IMR-90 (cell line): ENCODE measurements at regions of chr4 and their contacts with region 1.

Region 1: DNA sequence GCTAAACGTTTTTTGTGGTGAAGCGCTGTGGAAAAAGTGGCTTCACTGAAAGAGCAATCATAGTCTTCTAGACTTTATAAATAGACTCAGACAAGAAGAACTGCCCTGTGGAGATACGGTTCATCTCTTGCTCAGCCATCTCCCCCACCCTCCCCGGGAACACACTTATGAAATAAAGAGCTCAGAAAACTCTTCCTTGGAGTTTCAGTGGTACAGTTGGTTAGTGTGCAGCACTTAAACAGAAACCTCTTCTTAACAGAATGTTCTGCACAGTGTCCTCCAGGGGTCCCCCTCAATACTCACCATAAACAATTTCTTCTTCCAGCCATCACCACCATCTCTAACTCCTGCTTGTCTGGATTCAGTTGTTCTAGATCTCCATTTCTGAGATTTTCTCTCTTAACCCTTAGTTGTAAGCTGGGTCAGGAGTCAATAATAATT is 313.0 kb downstream of the ARHGAP10 start:
- DNase-seq: no peak
- ATAC-seq: no peak; the same call in 1 of the 2 replicates
- H3K4me3 ChIP-seq: no peak overlapping the region
- H3K27ac ChIP-seq: no peak overlapping the region
- H3K4me1 ChIP-seq: no peaks in the 10 kb centered on the region; the same call in 1 of the 2 replicates
- H3K27me3 ChIP-seq: no peaks in the 10 kb centered on the region
- CTCF ChIP-seq: no peak
- POLR2A ChIP-seq: no peak
- RAD21 ChIP-seq: no peak

Region 2: GRCh38 chr4:147285751-147286150 is 759.2 kb before region 1 on chr4:
- CTCF ChIA-PET with region 1: no interaction called
- POLR2A ChIA-PET with region 1: no interaction called
- dilution Hi-C with region 1: no loop called
- in situ Hi-C with region 1: no loop called
- intact Hi-C with region 1: no loop called
- DNase-seq: peak; percentile 13
- ATAC-seq: no peak
- H3K4me3 ChIP-seq: no peak overlapping the region
- H3K27ac ChIP-seq: no peak overlapping the region
- H3K4me1 ChIP-seq: no peaks in the 10 kb centered on the region
- H3K27me3 ChIP-seq: no peaks in the 10 kb centered on the region
- CTCF ChIP-seq: no peak
- POLR2A ChIP-seq: no peak
- RAD21 ChIP-seq: no peak

Region 3: GRCh38 chr4:147924604-147925412 is 120.1 kb before region 1 on chr4:
- CTCF ChIA-PET with region 1: no interaction called
- POLR2A ChIA-PET with region 1: no interaction called
- dilution Hi-C with region 1: no loop called
- in situ Hi-C with region 1: no loop called
- intact Hi-C with region 1: no loop called
- DNase-seq: peak; percentile 40
- ATAC-seq: no peak
- H3K4me3 ChIP-seq: no peak overlapping the region
- H3K27ac ChIP-seq: no peak overlapping the region
- H3K4me1 ChIP-seq: peaks cover 12% of the 10 kb centered on the region
- H3K27me3 ChIP-seq: no peaks in the 10 kb centered on the region
- CTCF ChIP-seq: peak; percentile 43
- POLR2A ChIP-seq: no peak
- RAD21 ChIP-seq: peak; percentile 44

Region 4: DNA sequence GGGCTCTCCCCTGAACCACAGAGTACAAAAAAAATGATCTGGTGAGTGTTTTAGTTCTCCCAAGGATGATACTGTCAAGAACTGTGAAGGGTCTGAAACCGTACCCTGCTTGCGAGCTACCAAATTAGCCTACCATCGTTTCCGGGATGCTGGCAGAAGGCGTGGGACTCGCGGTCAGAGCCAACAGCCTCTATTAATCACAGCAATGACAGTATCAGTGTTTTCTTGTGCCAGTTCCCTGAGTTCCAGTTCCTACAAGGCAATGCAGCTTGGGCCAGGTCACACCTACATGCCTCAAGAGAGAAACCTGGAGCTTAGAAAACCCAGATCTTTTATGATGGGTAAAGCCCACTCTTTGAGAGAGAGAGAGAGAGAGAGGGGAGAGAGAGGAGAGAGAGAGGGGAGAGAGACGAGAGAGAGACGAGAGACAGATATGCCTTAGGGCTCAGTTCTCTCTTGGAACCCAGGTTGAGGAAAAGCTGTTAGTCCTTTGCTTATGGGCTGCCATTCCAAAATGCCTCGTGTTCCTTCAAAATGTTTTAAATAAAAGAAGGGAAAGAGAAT is 14.8 kb after region 1 on chr4:
- CTCF ChIA-PET with region 1: no interaction called
- POLR2A ChIA-PET with region 1: interaction called, 12 read pairs
- dilution Hi-C with region 1: no loop called
- in situ Hi-C with region 1: no loop called
- intact Hi-C with region 1: no loop called
- DNase-seq: no peak
- ATAC-seq: no peak
- H3K4me3 ChIP-seq: no peak overlapping the region
- H3K27ac ChIP-seq: no peak overlapping the region
- H3K4me1 ChIP-seq: peaks cover 2% of the 10 kb centered on the region; the same call in 1 of the 2 replicates
- H3K27me3 ChIP-seq: no peaks in the 10 kb centered on the region
- CTCF ChIP-seq: no peak
- POLR2A ChIP-seq: no peak
- RAD21 ChIP-seq: no peak

Region 5: GRCh38 chr4:148126825-148127224 is 81.9 kb after region 1 on chr4:
- CTCF ChIA-PET with region 1: no interaction called
- POLR2A ChIA-PET with region 1: no interaction called
- dilution Hi-C with region 1: no loop called
- in situ Hi-C with region 1: loop called (anchors 25 kb)
- intact Hi-C with region 1: no loop called
- DNase-seq: peak; percentile 57
- ATAC-seq: peak; percentile 91
- H3K4me3 ChIP-seq: no peak overlapping the region
- H3K27ac ChIP-seq: no peak overlapping the region
- H3K4me1 ChIP-seq: no peaks in the 10 kb centered on the region
- H3K27me3 ChIP-seq: no peaks in the 10 kb centered on the region
- CTCF ChIP-seq: no peak
- POLR2A ChIP-seq: no peak
- RAD21 ChIP-seq: no peak